Ascending aorta (tissue), 2 donors: ENCODE measurements at regions of chr14 and their contacts with region 1.

Region 1: GRCh38 chr14:23120541-23121251 is 1.6 kb upstream of the CEBPE start:
- DNase-seq: peak; percentile 69 to 95
- H3K4me3 ChIP-seq: peak overlapping the region in 1 of 2 donors; percentile 8
- H3K27ac ChIP-seq: peak overlapping the region; percentile 53 to 63
- H3K4me1 ChIP-seq: peaks cover 6 to 24% of the 10 kb centered on the region in 2 donors
- H3K27me3 ChIP-seq: no peaks in the 10 kb centered on the region
- CTCF ChIP-seq: peak; percentile 99 to 100 (median 100)

Region 2: GRCh38 chr14:23186913-23187654 is 66.4 kb after region 1 on chr14:
- intact Hi-C with region 1: loop called (anchors 1 kb)
- DNase-seq: peak in 1 of 2 donors; percentile 77
- H3K4me3 ChIP-seq: no peak overlapping the region
- H3K27ac ChIP-seq: no peak overlapping the region
- H3K4me1 ChIP-seq: no peaks in the 10 kb centered on the region
- H3K27me3 ChIP-seq: no peaks in the 10 kb centered on the region
- CTCF ChIP-seq: peak; percentile 82 to 85 (median 85)

Region 3: DNA sequence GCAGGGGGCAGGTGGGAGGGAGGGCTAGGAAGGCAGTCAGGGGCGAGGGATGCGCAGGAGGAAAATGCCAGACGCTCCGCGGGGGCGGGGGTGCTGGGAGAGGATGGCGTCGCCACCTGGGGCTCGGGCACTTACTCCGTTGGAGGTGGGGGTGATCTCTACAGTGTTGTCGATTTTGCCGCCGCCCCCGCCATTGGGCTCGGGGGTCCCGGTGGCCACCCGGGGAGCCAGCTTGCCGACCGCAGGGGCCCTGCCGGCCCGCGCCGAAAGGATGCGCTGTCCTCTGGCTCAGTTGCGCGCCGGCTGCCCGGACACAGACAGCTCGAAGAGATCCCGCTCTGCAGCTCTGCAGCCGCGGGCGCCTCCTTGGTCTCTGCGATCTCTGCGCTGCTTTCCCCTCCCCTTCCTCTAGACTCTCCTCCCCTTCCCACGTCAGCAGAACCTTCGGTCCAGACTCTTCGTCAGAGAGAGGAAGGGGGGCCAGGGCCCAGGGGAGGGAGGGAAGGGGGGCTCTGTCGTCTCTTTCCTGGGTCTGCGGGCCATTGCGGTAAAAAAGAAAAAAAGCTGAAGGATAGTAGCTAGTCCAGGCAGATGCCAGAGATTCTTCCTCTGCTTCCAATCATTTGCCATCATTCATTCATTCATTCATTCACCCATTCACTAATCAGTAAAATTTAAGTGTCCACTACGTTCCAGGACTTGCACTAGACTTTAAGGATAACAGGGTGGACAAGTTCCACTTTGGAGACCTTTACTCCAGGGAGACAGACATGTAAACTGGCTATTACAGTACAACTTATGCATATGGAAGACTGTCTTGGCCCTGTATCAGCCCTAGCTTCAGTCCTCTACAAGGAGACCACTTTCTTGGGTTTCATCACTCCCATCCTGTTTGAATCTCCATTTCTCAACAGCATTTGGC is 232.1 kb after region 1 on chr14 and contains the start of gene SLC22A17:
- intact Hi-C with region 1: no loop called
- DNase-seq: peak in 1 of 2 donors; percentile 91
- H3K4me3 ChIP-seq: peak within 1 kb of the TSS; percentile 69 to 81
- H3K27ac ChIP-seq: peak within 1 kb of the TSS in 1 of 2 donors; percentile 24
- H3K4me1 ChIP-seq: peaks cover 4 to 9% of the 10 kb centered on the region in 2 donors
- H3K27me3 ChIP-seq: no peaks in the 10 kb centered on the region
- CTCF ChIP-seq: peak in 1 of 3 experiments; percentile 13
- total RNA-seq, gene SLC22A17: 89.7 TPM